Aorta (tissue), 5 donors: ENCODE measurements at regions of chr18 and their contacts with region 1.

Region 1: DNA sequence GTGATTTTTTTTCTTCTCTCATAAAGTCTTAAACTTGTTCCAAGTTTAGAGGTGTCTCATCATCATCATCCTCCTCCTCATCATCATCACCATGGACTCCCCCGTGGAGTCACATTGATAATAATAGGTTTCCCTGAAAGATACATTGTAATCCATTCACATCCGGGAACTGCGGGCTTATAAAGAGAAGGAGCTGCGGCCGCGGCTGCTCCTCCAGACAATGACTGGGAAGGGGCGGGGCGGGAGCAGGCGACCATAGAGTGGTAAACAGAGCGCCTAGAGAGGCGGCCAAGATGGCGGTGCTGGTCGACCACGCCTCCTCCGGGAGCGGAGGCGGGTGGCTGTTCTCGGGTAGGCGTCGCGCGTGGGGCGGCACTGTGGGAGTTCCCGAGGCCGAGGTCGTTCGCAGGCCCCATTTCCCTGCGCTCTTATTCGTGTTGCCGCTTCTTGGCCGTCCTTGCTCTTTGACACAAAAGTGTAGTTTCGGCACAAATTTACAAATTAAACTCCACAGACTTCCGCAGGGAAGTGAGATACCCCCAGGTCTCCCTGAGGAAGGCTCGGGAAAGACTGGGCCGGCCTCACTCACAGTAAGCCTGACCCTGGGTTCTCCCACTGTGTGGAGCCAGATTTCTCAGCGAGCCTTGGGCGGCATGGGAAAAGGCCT is 1.8 kb upstream of the TCF4 start:
- DNase-seq: peak; percentile 98 to 99
- ATAC-seq: peak; percentile 98
- H3K4me3 ChIP-seq: peak overlapping the region; percentile 96 to 99
- H3K27ac ChIP-seq: peak overlapping the region; percentile 9 to 66
- H3K4me1 ChIP-seq: no peaks in the 10 kb centered on the region
- H3K27me3 ChIP-seq: no peaks in the 10 kb centered on the region

Region 2: GRCh38 chr18:55243857-55244256 is 345.9 kb before region 1 on chr18:
- intact Hi-C with region 1: loop called in 1 of 2 experiments (anchors 5 kb)
- DNase-seq: no peak
- ATAC-seq: peak; percentile 82
- H3K4me3 ChIP-seq: peak overlapping the region in 1 of 2 donors; percentile 3
- H3K27ac ChIP-seq: peak overlapping the region; percentile 94 to 95
- H3K4me1 ChIP-seq: peaks cover 3% of the 10 kb centered on the region in 2 donors
- H3K27me3 ChIP-seq: no peaks in the 10 kb centered on the region

Region 3: GRCh38 chr18:55337908-55338521 is 251.7 kb before region 1 on chr18:
- intact Hi-C with region 1: loop called (anchors 5 to 10 kb)
- DNase-seq: peak in 1 of 2 donors; percentile 76
- ATAC-seq: peak; percentile 78
- H3K4me3 ChIP-seq: peak overlapping the region; percentile 2 to 47
- H3K27ac ChIP-seq: peak overlapping the region; percentile 84
- H3K4me1 ChIP-seq: peaks cover 0 to 4% of the 10 kb centered on the region in 2 donors
- H3K27me3 ChIP-seq: no peaks in the 10 kb centered on the region

Region 4: DNA sequence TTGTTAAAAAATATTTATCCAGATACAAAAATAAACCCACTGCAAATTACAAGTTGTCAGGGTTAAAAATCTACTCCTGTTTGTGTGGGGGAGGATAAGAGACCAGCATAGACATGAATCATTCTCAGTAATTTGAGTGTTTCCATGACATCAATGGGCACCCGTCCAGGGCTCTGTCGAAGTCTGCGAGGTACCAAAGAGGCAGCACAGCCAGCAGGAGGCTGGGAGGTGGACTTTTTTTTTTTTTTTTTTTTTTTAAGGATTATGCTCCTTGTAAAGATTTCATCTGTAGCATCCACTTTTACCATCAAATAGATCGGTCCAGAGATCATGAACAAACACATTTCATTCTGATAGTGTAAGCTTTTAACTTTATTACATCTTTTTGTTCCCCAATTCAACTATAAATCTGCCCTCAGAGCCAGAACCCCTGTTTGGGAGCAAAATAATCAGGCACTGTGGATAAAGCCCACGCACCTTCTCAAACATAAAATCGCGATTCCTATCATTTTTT is 183.8 kb before region 1 on chr18:
- intact Hi-C with region 1: loop called (anchors 5 kb)
- DNase-seq: peak; percentile 91
- ATAC-seq: peak; percentile 68
- H3K4me3 ChIP-seq: no peak overlapping the region
- H3K27ac ChIP-seq: peak overlapping the region in 1 of 2 donors; percentile 48
- H3K4me1 ChIP-seq: no peaks in the 10 kb centered on the region
- H3K27me3 ChIP-seq: no peaks in the 10 kb centered on the region

Region 5: GRCh38 chr18:55415258-55415871 is 174.4 kb before region 1 on chr18:
- intact Hi-C with region 1: loop called in 1 of 2 experiments (anchors 5 kb)
- DNase-seq: peak; percentile 90 to 97
- ATAC-seq: peak; percentile 91
- H3K4me3 ChIP-seq: no peak overlapping the region
- H3K27ac ChIP-seq: no peak overlapping the region
- H3K4me1 ChIP-seq: no peaks in the 10 kb centered on the region
- H3K27me3 ChIP-seq: no peaks in the 10 kb centered on the region

Region 6: DNA sequence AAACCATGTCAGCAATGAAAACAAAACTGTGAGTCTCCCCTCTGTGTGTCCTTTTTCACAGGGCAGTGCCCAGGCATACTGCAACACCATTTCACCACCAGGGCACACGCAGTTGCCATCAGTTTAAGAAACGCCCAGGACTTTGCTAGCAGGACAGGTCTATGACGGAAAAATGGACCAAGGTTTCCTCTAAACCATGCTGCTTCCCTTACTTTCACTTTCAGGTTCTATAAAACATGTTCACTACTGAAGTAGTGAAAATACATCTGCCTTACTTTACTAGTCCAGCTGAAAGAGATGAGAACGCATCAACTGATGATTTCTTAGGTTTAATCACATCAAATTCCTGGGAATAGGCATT is 112.3 kb before region 1 on chr18:
- intact Hi-C with region 1: loop called in 1 of 2 experiments (anchors 10 kb)
- DNase-seq: peak in 1 of 2 donors; percentile 53
- ATAC-seq: peak; percentile 80
- H3K4me3 ChIP-seq: peak overlapping the region; percentile 91 to 100
- H3K27ac ChIP-seq: peak overlapping the region; percentile 86 to 87
- H3K4me1 ChIP-seq: peaks cover 0 to 3% of the 10 kb centered on the region in 2 donors
- H3K27me3 ChIP-seq: no peaks in the 10 kb centered on the region